ENCODE measurements at regions of chr12 and their contacts with region 1.

Region 1: GRCh38 chr12:92987362-92987761 is 58.3 kb upstream of the EEA1 start:
- DNase-seq: peak; percentile 79
- ATAC-seq: peak; percentile 93
- H3K4me3 ChIP-seq: no peak overlapping the region
- H3K27ac ChIP-seq: no peak overlapping the region
- H3K4me1 ChIP-seq: peaks cover 2% of the 10 kb centered on the region; the same call in 1 of the 2 replicates
- H3K27me3 ChIP-seq: no peaks in the 10 kb centered on the region
- CTCF ChIP-seq: peak; percentile 74
- POLR2A ChIP-seq: no peak
- RAD21 ChIP-seq: peak; percentile 82

Region 2: GRCh38 chr12:92784795-92785562 is 202.4 kb before region 1 on chr12:
- CTCF ChIA-PET with region 1: no interaction called
- POLR2A ChIA-PET with region 1: no interaction called
- dilution Hi-C with region 1: no loop called
- in situ Hi-C with region 1: no loop called
- intact Hi-C with region 1: loop called (anchors 5 kb)
- DNase-seq: peak; percentile 79
- ATAC-seq: peak; percentile 74
- H3K4me3 ChIP-seq: no peak overlapping the region
- H3K27ac ChIP-seq: peak overlapping the region; percentile 74; the same call in 1 of the 2 replicates
- H3K4me1 ChIP-seq: peaks cover 8% of the 10 kb centered on the region
- H3K27me3 ChIP-seq: no peaks in the 10 kb centered on the region
- CTCF ChIP-seq: peak; percentile 61
- POLR2A ChIP-seq: no peak
- RAD21 ChIP-seq: peak; percentile 74

Region 3: GRCh38 chr12:93127582-93128331 is 140.4 kb after region 1 on chr12:
- CTCF ChIA-PET with region 1: interaction called, 3 read pairs
- POLR2A ChIA-PET with region 1: no interaction called
- dilution Hi-C with region 1: no loop called
- in situ Hi-C with region 1: no loop called
- intact Hi-C with region 1: loop called (anchors 5 kb)
- DNase-seq: peak; percentile 92
- ATAC-seq: peak; percentile 93
- H3K4me3 ChIP-seq: no peak overlapping the region
- H3K27ac ChIP-seq: no peak overlapping the region
- H3K4me1 ChIP-seq: peaks cover 8% of the 10 kb centered on the region
- H3K27me3 ChIP-seq: no peaks in the 10 kb centered on the region
- CTCF ChIP-seq: peak; percentile 47
- POLR2A ChIP-seq: no peak
- RAD21 ChIP-seq: peak; percentile 40; the same call in 1 of the 2 replicates

Region 4: GRCh38 chr12:93378373-93379325 is 391.3 kb after region 1 on chr12:
- CTCF ChIA-PET with region 1: interaction called, 6 read pairs
- POLR2A ChIA-PET with region 1: no interaction called
- dilution Hi-C with region 1: loop called (anchors 25 kb)
- in situ Hi-C with region 1: loop called (anchors 5 kb)
- intact Hi-C with region 1: loop called (anchors 1 kb)
- DNase-seq: peak; percentile 72
- ATAC-seq: peak; percentile 9
- H3K4me3 ChIP-seq: peak overlapping the region; percentile 98
- H3K27ac ChIP-seq: peak overlapping the region; percentile 59
- H3K4me1 ChIP-seq: peaks cover 12% of the 10 kb centered on the region
- H3K27me3 ChIP-seq: no peaks in the 10 kb centered on the region
- CTCF ChIP-seq: no peak
- POLR2A ChIP-seq: peak; percentile 60; the same call in 1 of the 2 replicates
- RAD21 ChIP-seq: 0 out of 2 replicates have a peak, but pooled peaks have one; percentile 4

Region 5: GRCh38 chr12:93397412-93397811 is 410.1 kb after region 1 on chr12:
- CTCF ChIA-PET with region 1: interaction called, 18 read pairs
- POLR2A ChIA-PET with region 1: interaction called, 7 read pairs
- dilution Hi-C with region 1: loop called (anchors 25 kb)
- in situ Hi-C with region 1: no loop called
- intact Hi-C with region 1: loop called (anchors 2 kb)
- DNase-seq: no peak
- ATAC-seq: no peak
- H3K4me3 ChIP-seq: no peak overlapping the region
- H3K27ac ChIP-seq: no peak overlapping the region
- H3K4me1 ChIP-seq: no peaks in the 10 kb centered on the region
- H3K27me3 ChIP-seq: no peaks in the 10 kb centered on the region
- CTCF ChIP-seq: no peak
- POLR2A ChIP-seq: no peak
- RAD21 ChIP-seq: no peak

Region 6: DNA sequence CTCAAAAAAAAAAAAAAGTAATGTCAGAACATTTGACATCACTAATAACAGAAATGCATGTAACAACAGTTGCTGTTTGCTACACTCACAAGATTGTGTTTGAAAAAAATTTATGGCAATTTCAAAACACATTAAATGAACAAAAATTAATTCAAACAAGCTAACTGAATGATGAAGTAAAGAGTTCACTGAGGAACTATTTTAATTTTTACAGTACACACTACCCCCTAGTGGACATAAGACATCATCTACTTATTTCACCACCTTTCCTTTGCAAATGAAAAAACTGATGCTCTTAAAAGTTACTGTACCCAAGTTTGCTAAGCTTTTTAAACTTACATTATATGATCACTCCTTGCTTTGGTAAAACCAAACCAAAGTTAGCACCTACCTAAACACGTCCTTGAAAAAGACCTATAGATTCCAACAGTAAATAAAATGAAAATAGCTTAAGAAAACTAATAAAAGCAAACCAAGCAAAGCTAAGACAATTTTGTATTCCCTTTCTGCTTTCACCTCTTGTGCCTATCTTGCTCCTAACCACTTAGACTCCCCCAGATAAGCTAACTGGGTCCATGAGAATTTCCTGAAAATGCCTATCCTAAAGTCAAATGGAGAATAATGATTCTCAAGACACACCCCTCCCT is 432.1 kb after region 1 on chr12:
- CTCF ChIA-PET with region 1: interaction called, 3 read pairs
- POLR2A ChIA-PET with region 1: no interaction called
- dilution Hi-C with region 1: no loop called
- in situ Hi-C with region 1: loop called (anchors 10 kb)
- intact Hi-C with region 1: loop called (anchors 1 kb)
- DNase-seq: peak; percentile 75
- ATAC-seq: peak; percentile 49; the same call in 1 of the 2 replicates
- H3K4me3 ChIP-seq: no peak overlapping the region
- H3K27ac ChIP-seq: no peak overlapping the region
- H3K4me1 ChIP-seq: peaks cover 19% of the 10 kb centered on the region
- H3K27me3 ChIP-seq: no peaks in the 10 kb centered on the region
- CTCF ChIP-seq: peak; percentile 63
- POLR2A ChIP-seq: no peak
- RAD21 ChIP-seq: peak; percentile 54

Region 7: DNA sequence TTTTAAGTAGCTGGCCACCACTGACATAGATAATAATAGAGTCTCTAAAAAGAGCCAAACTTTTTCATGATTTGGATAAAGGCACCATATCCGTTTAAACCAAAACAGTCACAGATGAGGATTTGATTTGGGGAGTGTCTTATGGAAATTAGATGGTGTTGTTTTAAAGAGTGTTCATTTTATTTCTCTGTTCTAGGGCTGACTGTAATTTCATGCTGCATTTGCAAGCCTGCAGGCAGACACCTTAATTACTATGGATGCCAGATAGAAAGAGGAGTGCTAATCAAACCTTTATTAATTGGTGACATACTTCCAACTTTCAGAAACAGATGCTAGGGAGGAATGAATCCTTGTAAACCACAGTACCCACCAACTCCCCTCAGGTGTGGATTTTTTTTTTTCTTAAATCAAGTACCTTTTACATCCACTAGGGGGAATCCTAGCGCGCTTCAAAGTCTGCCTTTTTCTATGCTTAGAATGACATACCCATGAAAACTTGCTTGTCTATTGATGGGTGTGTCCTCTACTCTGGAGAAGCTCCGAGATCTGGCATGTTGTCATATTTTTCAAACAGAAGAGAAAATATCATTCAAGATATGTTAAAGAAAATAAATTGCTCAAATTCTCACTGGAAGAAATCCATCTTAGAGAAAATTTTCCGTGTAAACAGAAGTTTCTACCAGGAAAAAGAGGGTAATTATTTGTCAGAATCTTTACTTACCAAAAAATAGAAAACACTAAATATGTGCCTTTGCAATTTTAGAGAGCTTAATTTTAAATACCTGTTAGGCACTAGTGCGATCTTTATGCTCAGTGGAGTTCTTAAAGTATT is 1146.8 kb after region 1 on chr12:
- CTCF ChIA-PET with region 1: no interaction called
- POLR2A ChIA-PET with region 1: no interaction called
- dilution Hi-C with region 1: no loop called
- in situ Hi-C with region 1: no loop called
- intact Hi-C with region 1: no loop called
- DNase-seq: peak; percentile 62
- ATAC-seq: peak; percentile 87
- H3K4me3 ChIP-seq: no peak overlapping the region
- H3K27ac ChIP-seq: no peak overlapping the region
- H3K4me1 ChIP-seq: no peaks in the 10 kb centered on the region
- H3K27me3 ChIP-seq: peaks cover 20% of the 10 kb centered on the region
- CTCF ChIP-seq: peak; percentile 78
- POLR2A ChIP-seq: no peak
- RAD21 ChIP-seq: peak; percentile 81